ENCODE measurements at regions of chr17 and their contacts with region 1.

Region 1: DNA sequence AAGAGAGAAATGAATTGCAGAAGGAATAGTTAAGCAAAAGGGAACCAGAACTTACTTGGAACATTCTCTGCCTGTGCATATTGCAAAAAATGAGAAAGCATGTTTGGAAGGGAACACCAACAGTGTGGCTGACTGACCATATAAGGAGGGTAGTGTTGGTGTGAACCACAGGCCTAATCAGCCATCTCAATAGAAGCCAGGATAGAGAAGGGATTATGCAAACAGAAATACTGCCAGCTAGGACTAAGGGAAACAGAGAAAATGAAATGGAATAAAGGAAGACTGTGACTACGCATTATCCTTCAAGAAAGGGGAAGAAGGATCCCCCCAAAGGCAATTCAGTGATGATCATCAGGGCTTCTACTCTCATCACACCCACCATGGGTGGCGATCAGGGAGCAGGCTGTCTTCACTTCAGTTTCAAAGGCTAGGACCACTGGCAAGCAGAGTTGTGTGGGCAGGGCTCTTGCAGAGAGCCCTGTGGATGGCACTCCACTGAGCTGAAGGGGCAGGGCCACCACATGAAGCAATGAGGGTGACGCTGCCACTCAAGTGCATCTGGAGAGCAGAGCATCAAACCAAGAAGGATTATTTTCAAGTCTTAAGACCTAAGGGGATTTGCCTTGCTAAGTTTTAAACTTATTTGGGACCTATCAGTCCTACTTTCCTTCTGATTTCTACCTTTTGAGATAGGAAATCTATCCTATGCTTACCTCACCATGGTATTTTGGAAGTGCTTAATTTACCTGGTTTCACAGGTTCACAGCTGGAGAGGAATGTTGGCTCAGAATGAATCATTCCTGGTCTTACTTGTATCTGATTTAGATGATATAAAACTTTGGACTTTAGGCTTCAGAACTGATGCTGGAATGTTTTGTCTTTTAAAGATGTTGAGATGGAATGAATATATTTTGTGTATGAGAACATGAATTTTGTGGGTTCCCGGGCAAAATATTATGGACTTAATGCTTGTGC is 140.5 kb downstream of the SSH2 start:
- DNase-seq: no peak
- ATAC-seq: no peak
- H3K4me3 ChIP-seq: no peak overlapping the region
- H3K27ac ChIP-seq: no peak overlapping the region
- H3K4me1 ChIP-seq: peaks cover 5% of the 10 kb centered on the region; the same call in 1 of the 2 replicates
- H3K27me3 ChIP-seq: no peaks in the 10 kb centered on the region
- CTCF ChIP-seq: no peak

Region 2: DNA sequence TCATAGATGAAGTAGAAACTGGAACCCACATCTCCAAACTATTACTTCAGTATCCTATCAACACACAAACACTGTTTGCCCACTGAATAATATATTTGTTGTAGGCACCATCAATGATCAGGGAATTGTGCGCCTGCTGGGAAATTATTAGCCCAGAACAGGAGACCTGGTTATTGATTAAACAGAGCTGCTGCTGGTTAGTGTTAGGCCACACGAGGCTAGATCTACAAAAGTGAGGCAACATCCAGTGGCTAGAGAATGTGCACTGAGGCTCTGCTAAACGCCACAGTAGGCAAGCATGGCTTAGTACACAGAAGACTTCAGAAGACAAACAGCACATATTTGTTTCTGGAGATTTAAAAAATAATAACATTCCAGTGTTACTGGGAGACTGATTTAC is 233.6 kb before region 1 on chr17:
- CTCF ChIA-PET with region 1: no interaction called
- POLR2A ChIA-PET with region 1: no interaction called
- in situ Hi-C with region 1: no loop called
- intact Hi-C with region 1: no loop called
- DNase-seq: no peak
- ATAC-seq: no peak
- H3K4me3 ChIP-seq: no peak overlapping the region
- H3K27ac ChIP-seq: no peak overlapping the region
- H3K4me1 ChIP-seq: no peaks in the 10 kb centered on the region
- H3K27me3 ChIP-seq: no peaks in the 10 kb centered on the region
- CTCF ChIP-seq: no peak

Region 3: GRCh38 chr17:29566473-29567300 is 222.8 kb before region 1 on chr17 and contains the start of gene ABHD15:
- CTCF ChIA-PET with region 1: interaction called, 17 read pairs
- POLR2A ChIA-PET with region 1: interaction called, 3 read pairs
- in situ Hi-C with region 1: no loop called
- intact Hi-C with region 1: no loop called
- DNase-seq: no peak
- ATAC-seq: peak; percentile 68
- H3K4me3 ChIP-seq: peak within 1 kb of the TSS; percentile 81 to 88
- H3K27ac ChIP-seq: peak within 1 kb of the TSS; percentile 92
- H3K4me1 ChIP-seq: peaks cover 14% of the 10 kb centered on the region
- H3K27me3 ChIP-seq: no peaks in the 10 kb centered on the region
- CTCF ChIP-seq: no peak
- total RNA-seq, gene ABHD15: 33.7 TPM

Region 4: DNA sequence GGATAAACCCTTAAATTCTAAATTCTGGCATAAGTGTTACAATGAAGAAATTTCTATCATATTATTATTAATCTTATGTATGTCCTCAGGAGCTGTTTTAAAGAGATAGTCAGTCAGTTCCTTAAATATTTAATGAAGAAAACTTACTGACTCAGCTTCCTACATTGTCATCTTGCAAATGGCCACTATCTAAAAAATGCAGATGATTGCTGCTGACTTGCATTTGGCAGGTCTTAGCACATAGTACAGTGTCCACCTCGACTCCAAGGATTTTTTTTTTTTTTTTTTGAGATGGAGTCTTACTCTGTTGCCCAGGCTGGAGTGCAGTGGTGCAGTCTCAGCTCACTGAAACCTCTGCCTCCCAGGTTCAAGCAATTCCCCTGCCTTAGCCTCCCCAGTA is 111.7 kb before region 1 on chr17:
- CTCF ChIA-PET with region 1: interaction called, 10 read pairs
- POLR2A ChIA-PET with region 1: no interaction called
- in situ Hi-C with region 1: no loop called
- intact Hi-C with region 1: no loop called
- DNase-seq: no peak
- ATAC-seq: no peak
- H3K4me3 ChIP-seq: no peak overlapping the region
- H3K27ac ChIP-seq: no peak overlapping the region
- H3K4me1 ChIP-seq: no peaks in the 10 kb centered on the region
- H3K27me3 ChIP-seq: no peaks in the 10 kb centered on the region
- CTCF ChIP-seq: no peak